ENCODE measurements at regions of chr10 and their contacts with region 1.

Region 1: GRCh38 chr10:102394079-102394800 is 1.3 kb upstream of the NFKB2 start:
- DNase-seq: peak; percentile 97 to 100 (median 99)
- H3K4me3 ChIP-seq: peak overlapping the region; percentile 100
- H3K4me3 Mint-ChIP-seq: peak overlapping the region; percentile 89 to 97 (median 96)
- H3K27ac ChIP-seq: peak overlapping the region; percentile 100
- H3K27ac Mint-ChIP-seq: peak overlapping the region; percentile 98 to 100 (median 100)
- H3K4me1 ChIP-seq: peaks cover 29% of the 10 kb centered on the region
- H3K4me1 Mint-ChIP-seq: peaks cover 31 to 44% (median 32%) of the 10 kb centered on the region in 3 donors
- H3K27me3 ChIP-seq: no peaks in the 10 kb centered on the region
- H3K27me3 Mint-ChIP-seq: peaks cover 0 to 8% of the 10 kb centered on the region in 2 donors

Region 2: DNA sequence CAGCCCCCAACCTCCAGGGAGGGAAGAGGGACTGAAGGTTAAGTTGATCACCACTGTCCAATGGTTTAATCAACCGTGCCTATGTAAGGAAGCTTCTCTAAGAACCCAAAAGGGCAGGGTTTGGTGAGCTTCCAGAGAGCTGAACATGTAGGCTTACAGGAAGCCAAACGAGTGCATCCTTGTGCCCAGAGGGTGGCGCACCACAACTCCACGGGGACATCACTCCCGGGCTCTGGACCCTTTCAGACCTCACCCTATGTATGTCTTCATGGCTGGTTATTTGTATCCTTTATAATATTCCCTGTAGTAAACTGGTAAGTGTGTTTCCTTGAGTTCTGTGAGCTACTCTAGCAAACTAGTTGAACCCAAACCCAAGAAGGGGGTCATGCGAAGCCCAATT is 10.2 kb before region 1 on chr10:
- CTCF ChIA-PET with region 1: interaction called, 21 read pairs
- POLR2A ChIA-PET with region 1: interaction called, 3 read pairs
- DNase-seq: no peak
- H3K4me3 ChIP-seq: no peak overlapping the region
- H3K4me3 Mint-ChIP-seq: no peak overlapping the region
- H3K27ac ChIP-seq: no peak overlapping the region
- H3K27ac Mint-ChIP-seq: peak overlapping the region in 1 of 8 donors; percentile 18
- H3K4me1 ChIP-seq: no peaks in the 10 kb centered on the region
- H3K4me1 Mint-ChIP-seq: no peaks in the 10 kb centered on the region
- H3K27me3 ChIP-seq: no peaks in the 10 kb centered on the region
- H3K27me3 Mint-ChIP-seq: no peaks in the 10 kb centered on the region

Region 3: DNA sequence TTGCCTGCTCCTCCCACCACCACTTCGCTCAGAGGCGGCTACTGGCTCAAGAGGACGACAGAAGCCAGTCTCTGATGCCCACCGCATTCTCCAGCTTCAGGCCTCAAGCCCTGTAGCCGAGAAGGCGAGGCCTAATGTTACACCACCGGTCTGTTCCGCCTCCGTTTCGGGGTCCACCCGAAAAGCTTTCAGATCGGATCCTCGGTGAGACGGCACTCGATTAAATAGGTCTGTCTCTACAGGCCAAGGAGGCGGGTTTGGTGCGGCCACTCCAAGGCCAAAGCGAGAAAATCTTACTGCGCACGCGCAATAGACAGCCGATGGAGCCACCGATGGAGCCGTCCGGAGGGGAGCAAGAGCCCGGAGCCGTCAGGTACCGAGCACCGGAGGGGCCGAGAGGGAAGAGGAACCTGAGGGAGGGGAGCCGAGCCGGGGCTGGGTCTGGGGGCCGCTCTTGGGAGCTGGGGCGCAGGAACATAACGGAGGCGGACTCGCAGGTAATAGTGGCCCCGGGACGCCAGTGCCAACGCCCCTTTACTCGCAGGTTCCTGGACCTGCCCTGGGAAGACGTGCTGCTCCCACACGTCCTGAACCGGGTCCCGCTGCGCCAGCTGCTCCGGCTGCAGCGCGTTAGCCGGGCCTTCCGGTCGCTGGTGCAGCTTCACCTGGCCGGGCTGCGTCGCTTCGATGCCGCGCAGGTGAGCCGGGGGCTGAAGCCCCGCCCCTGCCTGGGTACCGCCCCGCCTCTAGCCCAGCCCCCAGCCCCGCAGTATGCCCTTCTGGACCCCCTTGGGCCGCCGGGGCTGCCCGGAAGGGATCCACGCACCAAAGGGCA is 26.8 kb after region 1 on chr10 and contains the start of gene FBXL15:
- CTCF ChIA-PET with region 1: interaction called, 37 read pairs
- POLR2A ChIA-PET with region 1: interaction called, 30 read pairs
- DNase-seq: peak; percentile 86 to 96 (median 91)
- H3K4me3 ChIP-seq: peak within 1 kb of the TSS; percentile 95
- H3K4me3 Mint-ChIP-seq: peak within 1 kb of the TSS; percentile 92 to 99 (median 99)
- H3K27ac ChIP-seq: peak within 1 kb of the TSS; percentile 74
- H3K27ac Mint-ChIP-seq: peak within 1 kb of the TSS; percentile 89 to 98 (median 96)
- H3K4me1 ChIP-seq: peaks cover 35% of the 10 kb centered on the region
- H3K4me1 Mint-ChIP-seq: peaks cover 20 to 53% (median 32%) of the 10 kb centered on the region in 3 donors
- H3K27me3 ChIP-seq: peaks cover 2% of the 10 kb centered on the region
- H3K27me3 Mint-ChIP-seq: peaks cover 17% of the 10 kb centered on the region in 2 donors
- total RNA-seq, gene FBXL15: 13.5 to 16.3 TPM

Region 4: DNA sequence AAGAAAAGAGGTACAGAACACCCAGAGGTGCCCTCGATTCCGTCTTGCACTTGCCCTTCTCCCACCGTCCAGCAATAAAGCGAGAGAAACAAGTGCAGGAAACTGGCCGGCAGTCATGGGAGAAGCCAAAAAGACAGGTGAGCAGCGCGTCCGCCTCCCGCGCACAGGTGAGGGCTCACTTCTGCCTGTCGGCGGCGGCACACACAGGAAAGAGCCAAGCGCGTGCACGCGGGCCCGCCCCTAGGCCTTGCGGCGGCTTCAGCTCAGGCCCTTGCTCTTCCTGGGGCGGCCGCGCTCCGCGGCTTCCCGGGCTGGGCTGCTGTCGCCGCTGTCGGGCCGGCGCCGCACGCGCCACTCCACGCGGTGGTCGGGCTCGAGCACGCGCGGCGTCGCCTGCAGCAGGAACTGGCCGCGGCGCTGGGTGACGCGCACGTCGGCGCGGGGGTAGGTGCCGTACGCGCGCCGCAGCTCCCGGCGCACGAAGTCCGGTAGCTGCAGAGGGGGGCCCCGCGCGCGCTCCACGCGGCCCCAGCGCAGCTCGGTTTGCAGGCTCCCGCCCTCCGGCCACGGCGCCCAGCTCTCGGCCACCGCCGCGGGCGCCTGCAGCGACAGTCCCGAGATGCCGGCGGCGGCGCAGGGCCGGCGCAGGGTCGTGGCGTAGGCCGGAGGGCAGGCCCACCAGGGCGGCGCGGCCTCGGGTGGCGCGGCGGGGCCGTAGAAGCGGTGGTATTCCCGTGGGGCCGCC is 56.1 kb after region 1 on chr10:
- CTCF ChIA-PET with region 1: interaction called, 25 read pairs
- POLR2A ChIA-PET with region 1: interaction called, 24 read pairs
- DNase-seq: peak; percentile 82 to 95 (median 94)
- H3K4me3 ChIP-seq: peak overlapping the region; percentile 91
- H3K4me3 Mint-ChIP-seq: peak overlapping the region; percentile 93 to 98 (median 95)
- H3K27ac ChIP-seq: peak overlapping the region; percentile 87
- H3K27ac Mint-ChIP-seq: peak overlapping the region; percentile 74 to 99 (median 97)
- H3K4me1 ChIP-seq: peaks cover 16% of the 10 kb centered on the region
- H3K4me1 Mint-ChIP-seq: peaks cover 21 to 28% (median 24%) of the 10 kb centered on the region in 3 donors
- H3K27me3 ChIP-seq: no peaks in the 10 kb centered on the region
- H3K27me3 Mint-ChIP-seq: no peaks in the 10 kb centered on the region

Region 5: DNA sequence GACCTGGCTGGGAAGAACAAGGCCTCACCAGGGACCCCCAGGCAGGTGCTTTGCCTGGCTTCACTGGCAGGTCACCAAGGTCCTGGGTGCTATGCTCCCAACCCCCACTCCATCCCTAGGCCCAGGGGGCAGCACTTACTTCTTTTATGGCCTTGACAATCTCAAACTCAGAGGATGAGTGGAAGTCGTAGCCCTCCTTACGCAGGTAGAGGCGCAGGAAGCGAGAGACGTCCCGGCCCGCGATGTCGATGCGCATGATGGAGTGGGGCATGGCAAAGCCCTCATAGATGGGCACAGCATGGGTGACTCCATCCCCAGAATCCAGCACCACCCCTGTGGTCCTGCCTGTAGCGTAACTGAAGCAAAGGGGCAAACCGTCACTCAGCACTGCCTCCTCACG is 89.8 kb after region 1 on chr10:
- CTCF ChIA-PET with region 1: interaction called, 34 read pairs
- POLR2A ChIA-PET with region 1: interaction called, 3 read pairs
- DNase-seq: no peak
- H3K4me3 ChIP-seq: no peak overlapping the region
- H3K4me3 Mint-ChIP-seq: no peak overlapping the region
- H3K27ac ChIP-seq: no peak overlapping the region
- H3K27ac Mint-ChIP-seq: peak overlapping the region in 1 of 8 donors; percentile 21
- H3K4me1 ChIP-seq: no peaks in the 10 kb centered on the region
- H3K4me1 Mint-ChIP-seq: peaks cover 1 to 2% (median 1%) of the 10 kb centered on the region in 3 donors
- H3K27me3 ChIP-seq: no peaks in the 10 kb centered on the region
- H3K27me3 Mint-ChIP-seq: no peaks in the 10 kb centered on the region

Region 6: DNA sequence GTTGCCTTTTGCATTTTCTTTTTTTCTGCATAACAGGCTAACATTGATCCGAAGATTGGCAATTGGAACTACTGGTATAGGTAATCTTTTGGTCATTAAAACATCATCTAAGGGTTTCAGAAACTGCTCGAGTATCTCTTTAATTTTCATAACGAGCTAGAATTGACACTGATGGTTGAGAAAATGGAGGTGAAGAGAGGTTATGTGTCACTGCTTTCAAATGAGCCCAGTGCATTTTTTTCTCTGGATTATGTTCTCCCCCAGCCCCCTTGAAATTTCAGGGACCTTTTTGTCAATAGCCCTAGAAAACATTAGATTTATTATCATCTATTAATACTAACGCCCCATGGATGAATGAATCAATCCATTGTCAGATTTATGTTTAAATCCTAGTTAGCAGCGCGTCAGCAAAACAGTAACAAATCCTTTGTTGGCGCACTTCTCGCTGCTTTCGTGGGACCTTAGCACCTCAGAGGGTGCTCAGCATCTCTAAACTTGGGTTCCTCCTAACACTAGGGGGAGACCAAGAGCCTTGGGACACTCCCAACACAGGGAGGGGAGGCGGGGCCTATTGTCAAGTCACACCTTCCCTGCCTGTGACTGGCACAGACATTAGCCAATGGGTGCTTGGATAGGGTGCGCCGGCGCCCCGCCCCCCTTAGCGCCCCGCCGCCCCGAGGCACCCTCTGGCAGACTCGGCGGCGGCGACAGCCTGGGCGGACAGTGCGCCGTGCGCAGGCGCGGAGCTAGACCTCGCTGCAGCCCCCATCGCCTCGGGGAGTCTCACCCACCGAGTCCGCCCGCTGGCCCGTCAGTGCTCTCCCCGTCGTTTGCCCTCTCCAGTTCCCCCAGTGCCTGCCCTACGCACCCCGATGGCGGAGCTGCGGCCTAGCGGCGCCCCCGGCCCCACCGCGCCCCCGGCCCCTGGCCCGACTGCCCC is 109.3 kb after region 1 on chr10 and contains the start of gene SUFU:
- CTCF ChIA-PET with region 1: interaction called, 19 read pairs
- POLR2A ChIA-PET with region 1: interaction called, 6 read pairs
- DNase-seq: peak; percentile 97 to 99 (median 97)
- H3K4me3 ChIP-seq: peak within 1 kb of the TSS; percentile 99
- H3K4me3 Mint-ChIP-seq: no peak within 1 kb of the TSS
- H3K27ac ChIP-seq: peak within 1 kb of the TSS; percentile 79
- H3K27ac Mint-ChIP-seq: peak within 1 kb of the TSS; percentile 49 to 95 (median 90)
- H3K4me1 ChIP-seq: peaks cover 39% of the 10 kb centered on the region
- H3K4me1 Mint-ChIP-seq: peaks cover 29 to 55% (median 45%) of the 10 kb centered on the region in 3 donors
- H3K27me3 ChIP-seq: no peaks in the 10 kb centered on the region
- H3K27me3 Mint-ChIP-seq: no peaks in the 10 kb centered on the region
- total RNA-seq, gene SUFU: 7.5 to 8.3 TPM

Region 7: DNA sequence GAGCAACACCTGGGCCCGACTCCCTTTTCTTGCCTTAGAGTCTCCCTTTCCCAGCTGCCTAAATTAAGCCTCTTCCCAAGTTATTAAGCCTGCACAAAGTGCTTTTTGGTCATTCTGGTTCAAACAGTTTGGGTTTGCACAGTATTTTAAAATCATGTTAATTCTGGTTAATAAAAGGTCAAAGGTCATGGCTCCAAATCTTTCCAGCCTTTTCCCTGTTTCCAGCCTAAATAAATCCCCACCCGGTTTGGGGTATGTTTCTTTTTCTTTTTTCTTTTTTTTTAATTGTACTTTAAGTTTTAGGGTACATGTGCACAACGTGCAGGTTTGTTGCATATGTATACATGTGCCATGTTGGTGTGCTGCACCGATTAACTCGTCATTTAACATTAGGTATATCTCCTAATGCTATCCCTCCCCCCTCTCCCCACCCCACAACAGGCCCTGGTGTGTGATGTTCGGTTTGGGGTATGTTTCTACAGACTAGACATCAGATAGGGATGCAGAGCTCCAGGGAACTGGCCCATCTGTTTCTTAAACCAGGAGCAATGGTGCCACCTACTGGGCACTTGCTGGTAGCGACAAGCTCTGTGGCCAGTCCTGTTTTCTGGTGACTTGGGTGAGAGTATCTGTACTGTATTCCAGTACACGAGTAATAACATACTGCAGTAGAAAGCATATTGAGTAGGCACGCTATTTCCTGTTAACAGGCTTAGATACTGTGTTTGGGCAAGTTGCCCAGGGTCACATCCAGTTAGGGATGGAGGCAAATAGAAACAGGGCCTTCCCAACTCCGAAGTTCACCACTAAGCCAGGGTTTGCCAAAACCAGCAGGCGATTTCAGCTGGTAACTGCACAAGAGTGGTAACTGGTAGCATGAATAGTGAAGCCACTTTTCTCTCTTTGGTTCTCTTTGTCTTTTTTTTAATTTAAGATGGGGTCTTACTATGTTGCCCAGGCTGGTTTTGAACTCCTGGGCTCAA is 189.5 kb after region 1 on chr10:
- CTCF ChIA-PET with region 1: interaction called, 24 read pairs
- POLR2A ChIA-PET with region 1: interaction called, 3 read pairs
- DNase-seq: peak; percentile 64 to 87 (median 66)
- H3K4me3 ChIP-seq: no peak overlapping the region
- H3K4me3 Mint-ChIP-seq: no peak overlapping the region
- H3K27ac ChIP-seq: no peak overlapping the region
- H3K27ac Mint-ChIP-seq: peak overlapping the region in 4 of 8 donors; percentile 50 to 71 (median 58)
- H3K4me1 ChIP-seq: no peaks in the 10 kb centered on the region
- H3K4me1 Mint-ChIP-seq: peaks cover 0 to 12% (median 6%) of the 10 kb centered on the region in 3 donors
- H3K27me3 ChIP-seq: no peaks in the 10 kb centered on the region
- H3K27me3 Mint-ChIP-seq: no peaks in the 10 kb centered on the region

Region 8: GRCh38 chr10:102682416-102682815 is 288.2 kb after region 1 on chr10:
- CTCF ChIA-PET with region 1: no interaction called
- POLR2A ChIA-PET with region 1: no interaction called
- DNase-seq: no peak
- H3K4me3 ChIP-seq: no peak overlapping the region
- H3K4me3 Mint-ChIP-seq: no peak overlapping the region
- H3K27ac ChIP-seq: no peak overlapping the region
- H3K27ac Mint-ChIP-seq: peak overlapping the region in 2 of 8 donors; percentile 9 to 45
- H3K4me1 ChIP-seq: peaks cover 11% of the 10 kb centered on the region
- H3K4me1 Mint-ChIP-seq: peaks cover 2 to 14% (median 12%) of the 10 kb centered on the region in 3 donors
- H3K27me3 ChIP-seq: no peaks in the 10 kb centered on the region
- H3K27me3 Mint-ChIP-seq: no peaks in the 10 kb centered on the region